Calu3 (cell line): ENCODE measurements at regions of chr22 and their contacts with region 1.

Region 1: GRCh38 chr22:37965940-37966664 is 12.6 kb downstream of the POLR2F start:
- DNase-seq: no peak
- H3K4me3 Mint-ChIP-seq: no peak overlapping the region
- H3K27ac Mint-ChIP-seq: no peak overlapping the region
- H3K4me1 Mint-ChIP-seq: no peaks in the 10 kb centered on the region
- H3K27me3 Mint-ChIP-seq: no peaks in the 10 kb centered on the region
- CTCF ChIP-seq: no peak

Region 2: DNA sequence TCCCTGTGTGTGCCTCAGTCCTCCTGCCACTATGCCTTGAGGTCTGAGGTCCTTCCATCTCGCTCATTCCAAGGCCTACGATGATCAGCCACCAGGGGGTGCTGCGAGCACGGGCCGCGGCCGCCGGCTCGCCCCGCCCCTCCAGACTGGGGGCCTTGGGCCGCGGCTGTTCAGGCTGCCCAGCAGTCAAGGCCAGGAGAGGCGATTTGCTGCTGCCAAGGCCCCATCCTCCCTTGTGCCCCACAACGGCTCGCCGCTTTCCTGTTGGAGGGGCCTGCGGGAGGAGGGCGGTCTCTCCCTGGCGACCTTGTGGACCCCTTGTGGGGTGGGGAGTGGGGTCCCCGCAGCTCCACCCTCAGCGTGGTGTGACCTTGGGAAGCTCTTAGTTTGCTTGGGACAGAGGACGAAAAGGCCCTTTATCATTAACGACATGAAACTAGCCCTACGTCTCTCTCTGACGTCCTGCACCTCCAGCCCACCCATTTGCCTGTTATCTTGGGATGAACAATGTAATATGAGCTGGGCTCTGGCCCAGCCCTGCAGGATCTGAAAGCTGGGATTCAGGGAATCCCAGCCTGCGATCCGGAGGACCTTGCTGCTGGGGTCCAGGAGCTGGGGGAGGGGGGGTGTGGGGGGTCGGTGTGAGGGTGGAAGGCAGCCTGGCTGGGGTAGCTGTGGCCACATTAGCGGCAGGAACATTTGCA is 148.2 kb before region 1 on chr22:
- CTCF ChIA-PET with region 1: no interaction called
- intact Hi-C with region 1: loop called (anchors 5 kb)
- DNase-seq: peak; percentile 94
- H3K4me3 Mint-ChIP-seq: peak overlapping the region; percentile 56
- H3K27ac Mint-ChIP-seq: no peak overlapping the region
- H3K4me1 Mint-ChIP-seq: peaks cover 9% of the 10 kb centered on the region
- H3K27me3 Mint-ChIP-seq: no peaks in the 10 kb centered on the region
- CTCF ChIP-seq: peak; percentile 88

Region 3: DNA sequence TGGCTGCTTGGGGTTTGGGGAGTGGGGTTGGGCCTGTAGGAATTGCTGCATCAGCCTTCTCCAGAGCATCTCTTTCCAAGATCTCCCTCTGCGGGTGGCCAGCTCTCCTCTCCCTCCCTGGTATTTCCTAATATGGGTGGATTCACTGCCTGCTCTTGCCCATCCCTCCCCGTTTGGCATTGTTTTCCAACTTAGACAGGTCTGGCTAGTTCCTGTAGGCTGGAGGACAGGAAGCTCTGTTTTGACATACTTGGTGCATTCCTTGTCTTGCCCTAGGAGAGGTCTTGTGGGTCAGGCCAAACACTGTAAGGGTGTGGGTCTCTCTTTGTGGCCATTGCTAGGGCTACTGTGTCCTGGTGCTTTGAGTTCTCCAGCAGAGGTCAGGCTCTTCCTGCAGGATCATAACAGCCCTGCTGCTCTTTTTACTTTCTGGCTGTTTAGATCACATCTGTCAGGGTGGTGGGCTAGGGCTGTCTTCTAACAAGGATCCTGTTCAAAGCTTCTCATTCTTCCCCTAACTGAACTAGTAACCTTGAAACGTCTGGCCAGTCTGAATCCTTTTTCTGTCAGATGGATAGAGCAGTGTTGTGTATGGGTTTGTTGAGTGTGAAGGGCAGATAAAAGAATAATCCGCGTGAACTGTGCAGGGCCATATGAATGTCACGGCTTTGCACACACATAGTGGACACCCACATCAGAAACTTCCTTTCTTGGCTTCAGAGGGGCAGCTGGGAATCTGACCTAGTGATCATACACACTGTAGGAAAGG is 78.3 kb before region 1 on chr22:
- CTCF ChIA-PET with region 1: no interaction called
- intact Hi-C with region 1: loop called (anchors 2 kb)
- DNase-seq: no peak
- H3K4me3 Mint-ChIP-seq: no peak overlapping the region
- H3K27ac Mint-ChIP-seq: no peak overlapping the region
- H3K4me1 Mint-ChIP-seq: peaks cover 9% of the 10 kb centered on the region
- H3K27me3 Mint-ChIP-seq: no peaks in the 10 kb centered on the region
- CTCF ChIP-seq: peak; percentile 49

Region 4: GRCh38 chr22:37943136-37943824 is 22.8 kb before region 1 on chr22:
- CTCF ChIA-PET with region 1: no interaction called
- intact Hi-C with region 1: no loop called
- DNase-seq: no peak
- H3K4me3 Mint-ChIP-seq: no peak overlapping the region
- H3K27ac Mint-ChIP-seq: no peak overlapping the region
- H3K4me1 Mint-ChIP-seq: no peaks in the 10 kb centered on the region
- H3K27me3 Mint-ChIP-seq: no peaks in the 10 kb centered on the region
- CTCF ChIP-seq: no peak